IMR-90 (cell line): ENCODE measurements at regions of chr2 and their contacts with region 1.

Region 1: DNA sequence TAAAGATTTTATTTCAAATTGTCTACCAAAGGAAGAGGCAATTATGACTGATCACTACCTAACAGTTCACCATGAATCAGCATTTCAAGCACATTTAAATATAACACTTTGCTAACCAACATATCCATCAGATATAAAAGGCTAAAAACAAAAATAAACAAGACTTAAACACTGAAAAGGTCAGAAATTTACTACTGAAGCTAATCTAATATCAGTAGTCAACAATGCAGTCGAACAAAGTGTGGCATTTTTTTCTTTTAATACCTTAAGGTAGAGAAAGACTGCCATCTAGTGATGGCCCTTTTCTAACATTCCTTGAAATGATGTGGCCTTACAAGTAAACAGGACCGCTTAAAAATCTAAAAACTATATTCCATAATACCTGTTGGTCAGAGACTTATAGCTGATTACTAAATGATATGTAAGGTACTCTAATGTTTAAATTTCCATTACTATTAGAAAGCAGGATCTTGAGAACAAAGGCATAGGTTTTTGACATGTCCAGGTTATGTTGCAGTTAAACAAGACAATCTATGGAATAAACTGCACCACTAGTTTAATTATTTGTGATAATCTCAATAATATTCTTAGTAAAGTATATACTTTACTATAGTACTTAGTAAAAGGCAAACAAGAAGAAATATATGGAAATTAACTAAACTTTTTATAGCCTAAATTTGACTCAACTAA is 80.0 kb downstream of the EXOC6B start:
- DNase-seq: peak; percentile 78
- ATAC-seq: peak; percentile 85
- H3K4me3 ChIP-seq: no peak overlapping the region
- H3K27ac ChIP-seq: no peak overlapping the region
- H3K4me1 ChIP-seq: no peaks in the 10 kb centered on the region
- H3K27me3 ChIP-seq: no peaks in the 10 kb centered on the region
- CTCF ChIP-seq: peak; percentile 79
- POLR2A ChIP-seq: no peak
- RAD21 ChIP-seq: peak; percentile 82

Region 2: DNA sequence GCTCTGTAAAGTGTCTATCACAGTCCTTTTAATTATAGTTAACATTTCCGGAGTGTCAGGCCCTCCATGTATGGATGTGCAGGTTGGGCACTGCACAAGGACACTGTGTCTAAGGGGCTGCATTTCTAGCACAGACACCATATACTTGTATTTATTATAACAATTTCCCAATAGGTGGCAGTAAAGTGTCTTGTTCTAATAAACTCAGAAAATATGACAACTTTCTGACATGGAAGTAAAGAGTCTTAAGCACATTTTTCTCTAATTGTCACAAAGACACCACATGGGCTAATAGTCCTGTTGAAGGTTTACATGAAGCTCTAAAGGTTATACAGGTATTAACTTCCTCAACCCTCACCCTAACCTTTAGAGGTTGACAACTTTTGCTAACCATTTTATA is 1135.9 kb before region 1 on chr2:
- CTCF ChIA-PET with region 1: no interaction called
- POLR2A ChIA-PET with region 1: no interaction called
- dilution Hi-C with region 1: no loop called
- in situ Hi-C with region 1: no loop called
- intact Hi-C with region 1: loop called (anchors 5 kb)
- DNase-seq: peak; percentile 54
- ATAC-seq: peak; percentile 81
- H3K4me3 ChIP-seq: no peak overlapping the region
- H3K27ac ChIP-seq: no peak overlapping the region
- H3K4me1 ChIP-seq: no peaks in the 10 kb centered on the region
- H3K27me3 ChIP-seq: peaks cover 42% of the 10 kb centered on the region
- CTCF ChIP-seq: peak; percentile 49
- POLR2A ChIP-seq: no peak
- RAD21 ChIP-seq: peak; percentile 43

Region 3: DNA sequence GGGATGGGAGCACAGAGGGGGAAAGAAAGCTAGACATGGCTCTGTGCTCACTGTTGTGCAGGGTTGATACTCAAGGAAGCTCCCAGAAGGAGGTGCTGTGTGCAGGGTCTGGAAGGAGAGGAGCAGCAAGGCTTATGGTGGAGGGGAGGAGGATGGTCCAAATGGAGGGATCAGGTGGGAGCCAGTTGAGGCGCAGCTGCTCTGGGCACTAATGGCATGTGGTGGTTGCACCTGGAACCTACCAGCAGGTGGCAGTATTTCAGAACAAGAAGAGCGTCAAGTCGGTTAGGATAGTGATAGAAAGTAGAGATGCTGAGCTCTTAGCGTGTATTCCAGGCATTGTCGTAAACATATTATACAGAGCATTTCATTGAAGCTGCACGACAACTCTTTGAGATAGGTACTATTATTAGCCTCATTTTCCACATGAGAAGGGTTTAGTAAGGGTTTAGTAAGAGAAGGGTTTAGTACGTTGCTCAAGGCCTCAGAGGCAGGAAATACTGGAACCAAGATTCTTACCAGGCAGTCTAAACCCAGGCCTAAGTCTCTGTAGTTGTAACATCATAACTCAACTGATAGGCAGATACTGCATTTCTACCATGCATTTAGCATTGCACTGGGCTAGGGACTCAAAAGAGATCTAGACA is 821.8 kb before region 1 on chr2:
- CTCF ChIA-PET with region 1: no interaction called
- POLR2A ChIA-PET with region 1: no interaction called
- dilution Hi-C with region 1: no loop called
- in situ Hi-C with region 1: loop called (anchors 10 kb)
- intact Hi-C with region 1: loop called (anchors 5 kb)
- DNase-seq: peak; percentile 65
- ATAC-seq: peak; percentile 72
- H3K4me3 ChIP-seq: no peak overlapping the region
- H3K27ac ChIP-seq: no peak overlapping the region
- H3K4me1 ChIP-seq: no peaks in the 10 kb centered on the region
- H3K27me3 ChIP-seq: peaks cover 12% of the 10 kb centered on the region
- CTCF ChIP-seq: peak; percentile 76
- POLR2A ChIP-seq: no peak
- RAD21 ChIP-seq: peak; percentile 67

Region 4: DNA sequence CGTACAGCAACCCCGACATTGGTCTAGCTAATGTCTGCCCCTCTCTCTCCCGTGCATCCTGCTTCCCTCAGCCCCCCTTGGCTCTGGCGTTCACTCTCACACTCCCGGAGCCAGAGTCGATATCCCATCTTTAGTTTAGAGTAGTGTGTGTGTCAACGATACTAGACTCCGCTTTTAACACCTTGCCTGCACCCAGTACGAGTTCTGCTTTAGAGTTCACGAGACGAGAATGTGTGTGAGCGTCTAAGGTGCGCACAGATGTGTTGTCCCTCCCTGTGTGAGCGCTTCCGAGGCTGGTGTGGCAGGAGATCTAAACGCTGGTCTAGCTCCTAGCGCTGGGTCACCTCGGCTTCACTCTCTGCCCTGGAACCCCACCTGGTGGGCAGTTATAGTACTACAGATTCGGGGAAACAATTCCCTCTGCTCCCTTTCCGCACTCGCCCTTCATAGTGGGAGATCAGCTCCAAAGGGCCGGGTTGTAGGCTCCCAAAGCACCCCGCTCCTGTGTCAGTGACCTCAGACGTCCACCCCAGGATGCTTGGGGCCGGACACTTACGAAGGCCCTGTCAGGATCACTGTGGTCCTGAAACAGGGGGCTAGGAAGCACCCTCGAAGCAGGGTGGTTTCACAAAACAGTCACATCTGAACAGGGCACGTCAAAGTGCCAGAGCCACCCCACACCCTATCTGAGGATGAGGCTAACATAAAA is 595.5 kb before region 1 on chr2:
- CTCF ChIA-PET with region 1: interaction called, 6 read pairs
- POLR2A ChIA-PET with region 1: no interaction called
- dilution Hi-C with region 1: no loop called
- in situ Hi-C with region 1: no loop called
- intact Hi-C with region 1: loop called (anchors 2 kb)
- DNase-seq: peak; percentile 64
- ATAC-seq: peak; percentile 86
- H3K4me3 ChIP-seq: no peak overlapping the region; the same call in 1 of the 2 replicates
- H3K27ac ChIP-seq: no peak overlapping the region
- H3K4me1 ChIP-seq: peaks cover 14% of the 10 kb centered on the region; the same call in 1 of the 2 replicates
- H3K27me3 ChIP-seq: peaks cover 89% of the 10 kb centered on the region
- CTCF ChIP-seq: peak; percentile 88
- POLR2A ChIP-seq: no peak
- RAD21 ChIP-seq: peak; percentile 91

Region 5: GRCh38 chr2:72350852-72351251 is 395.0 kb before region 1 on chr2:
- CTCF ChIA-PET with region 1: no interaction called
- POLR2A ChIA-PET with region 1: no interaction called
- dilution Hi-C with region 1: no loop called
- in situ Hi-C with region 1: no loop called
- intact Hi-C with region 1: loop called (anchors 10 kb)
- DNase-seq: no peak
- ATAC-seq: no peak
- H3K4me3 ChIP-seq: no peak overlapping the region
- H3K27ac ChIP-seq: no peak overlapping the region
- H3K4me1 ChIP-seq: no peaks in the 10 kb centered on the region
- H3K27me3 ChIP-seq: no peaks in the 10 kb centered on the region
- CTCF ChIP-seq: no peak
- POLR2A ChIP-seq: no peak
- RAD21 ChIP-seq: no peak

Region 6: DNA sequence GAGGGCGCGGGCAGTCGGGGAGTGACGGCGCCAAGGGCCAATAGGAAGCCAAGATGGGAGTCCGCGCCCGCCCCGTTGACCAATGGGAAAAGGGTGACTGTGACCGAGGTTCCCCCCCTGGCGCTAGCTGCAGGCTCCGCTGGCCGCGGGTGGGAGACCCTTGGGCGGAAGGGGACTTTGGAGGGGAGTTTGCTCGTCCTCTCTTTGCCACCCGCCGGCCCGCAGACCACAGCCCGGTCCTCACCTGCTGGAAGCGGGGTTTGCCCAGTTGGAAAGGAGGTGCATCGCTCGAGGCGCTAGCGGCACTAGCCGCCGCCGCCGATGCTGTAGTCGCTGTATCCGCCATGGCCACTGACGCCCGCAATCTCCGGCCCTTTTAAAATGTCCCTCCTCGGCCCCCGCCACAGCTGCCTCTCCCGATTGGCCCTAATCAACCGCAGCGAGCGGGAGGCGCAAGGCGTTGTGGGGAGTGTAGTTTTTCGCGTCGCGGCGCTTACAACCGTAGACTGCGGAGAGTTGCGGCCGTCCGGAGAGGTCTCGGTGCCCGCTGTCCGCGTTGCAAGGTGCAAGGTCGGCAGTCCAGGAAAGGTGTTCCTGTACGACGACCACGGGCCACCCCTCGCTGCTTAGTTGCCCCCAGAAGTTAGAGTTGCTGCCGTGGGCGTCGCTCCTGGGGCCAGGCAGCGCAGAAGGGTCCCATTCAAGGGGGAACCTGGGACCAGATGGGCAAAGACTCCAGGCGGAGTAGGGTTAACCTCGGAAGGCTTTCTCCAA is 325.7 kb after region 1 on chr2 and contains the start of gene SFXN5:
- CTCF ChIA-PET with region 1: no interaction called
- POLR2A ChIA-PET with region 1: no interaction called
- dilution Hi-C with region 1: no loop called
- in situ Hi-C with region 1: no loop called
- intact Hi-C with region 1: no loop called
- DNase-seq: peak; percentile 93
- ATAC-seq: peak; percentile 92
- H3K4me3 ChIP-seq: peak within 1 kb of the TSS; percentile 82
- H3K27ac ChIP-seq: peak within 1 kb of the TSS; percentile 86
- H3K4me1 ChIP-seq: peaks cover 12% of the 10 kb centered on the region
- H3K27me3 ChIP-seq: no peaks in the 10 kb centered on the region
- CTCF ChIP-seq: peak; percentile 36
- POLR2A ChIP-seq: peak; percentile 54; the same call in 1 of the 2 replicates
- RAD21 ChIP-seq: no peak
- total RNA-seq, gene SFXN5: 8.3 and 8.6 TPM in 2 replicates